CD4-positive, alpha-beta T cell (primary cell): ENCODE measurements at regions of chr6 and their contacts with region 1.

Region 1: DNA sequence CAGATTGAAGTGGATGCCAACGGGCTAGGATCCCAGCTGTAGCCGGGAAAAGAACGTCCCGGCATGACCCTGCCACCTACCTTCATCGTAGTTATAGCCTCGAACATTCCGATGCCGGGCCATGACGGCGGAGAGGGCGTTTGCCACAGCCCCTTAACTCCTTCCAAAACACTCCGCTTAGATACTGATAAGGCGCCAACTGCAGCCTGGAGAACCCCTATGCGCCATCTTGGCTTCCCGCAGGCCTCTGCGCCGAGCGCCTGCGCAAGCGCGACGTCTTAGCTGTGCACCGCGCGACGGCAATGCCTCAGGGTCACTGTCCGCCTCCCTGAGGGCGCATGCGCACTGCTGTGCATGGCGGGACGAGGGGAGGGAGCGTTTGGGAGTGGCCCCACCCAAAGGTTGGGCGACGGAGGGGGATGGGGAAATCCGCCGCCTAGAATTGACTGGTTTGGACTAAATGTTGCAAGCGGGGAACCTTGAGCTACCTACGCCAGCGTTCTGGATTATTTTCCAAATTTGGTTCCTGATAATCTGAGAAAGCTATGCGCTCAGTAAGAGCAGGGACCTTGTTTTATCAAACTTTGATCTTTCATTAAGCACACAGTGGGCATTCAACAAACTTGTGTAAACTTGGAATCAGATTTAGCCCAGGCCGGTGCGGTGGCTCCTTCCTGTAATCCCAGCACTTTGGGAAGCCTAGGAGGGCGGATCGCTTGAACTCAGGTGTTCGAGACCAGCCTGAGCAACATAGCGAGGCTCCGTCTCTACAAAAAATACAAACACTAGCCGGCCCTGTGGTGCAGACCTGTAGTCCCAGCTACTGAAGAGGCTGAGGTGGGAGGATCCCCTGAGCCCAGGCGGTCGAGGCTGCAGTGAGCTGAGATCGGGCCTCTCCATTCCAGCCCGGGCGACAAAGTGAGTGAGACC is at the start of gene HBS1L:
- DNase-seq: peak; percentile 92 to 100 (median 96)
- ATAC-seq: peak; percentile 96
- H3K4me3 ChIP-seq: peak within 1 kb of the TSS; percentile 86
- H3K4me3 Mint-ChIP-seq: peak within 1 kb of the TSS; percentile 96
- H3K27ac ChIP-seq: peak within 1 kb of the TSS; percentile 90 to 94
- H3K27ac Mint-ChIP-seq: peak within 1 kb of the TSS; percentile 99
- H3K4me1 ChIP-seq: peaks cover 16% of the 10 kb centered on the region
- H3K4me1 Mint-ChIP-seq: peaks cover 46% of the 10 kb centered on the region
- H3K27me3 ChIP-seq: no peaks in the 10 kb centered on the region
- H3K27me3 Mint-ChIP-seq: no peaks in the 10 kb centered on the region
- CTCF ChIP-seq: no peak
- total RNA-seq, gene HBS1L: 106 to 117 TPM

Region 2: DNA sequence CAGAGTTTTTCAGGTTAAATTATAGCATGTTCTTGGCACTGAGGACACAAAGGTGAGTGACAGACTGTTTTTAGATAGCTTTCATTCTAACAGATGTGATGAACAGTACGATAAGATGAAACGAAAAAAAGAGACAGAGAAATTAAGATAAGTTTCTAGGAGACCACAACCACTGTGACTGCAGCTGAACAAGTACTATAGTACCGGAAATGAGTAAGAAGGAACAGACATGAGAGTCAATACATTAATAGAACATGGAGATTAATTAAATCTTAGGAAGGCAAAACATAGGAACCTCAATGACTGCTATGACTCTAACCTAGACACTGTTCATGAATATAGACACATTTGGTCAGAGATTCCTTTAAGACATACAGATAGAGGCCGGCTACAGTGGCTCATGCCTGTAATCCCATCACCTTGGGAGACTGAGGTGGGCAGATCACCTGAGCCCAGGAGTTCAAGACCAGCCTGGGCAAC is 40.4 kb before region 1 on chr6:
- CTCF ChIA-PET with region 1: no interaction called
- POLR2A ChIA-PET with region 1: interaction called, 3 read pairs
- intact Hi-C with region 1: loop called in 1 of 2 experiments (anchors 5 kb)
- DNase-seq: peak in 4 of 14 experiments; percentile 24 to 67 (median 54)
- ATAC-seq: peak; percentile 87
- H3K4me3 ChIP-seq: peak overlapping the region; percentile 29
- H3K4me3 Mint-ChIP-seq: peak overlapping the region; percentile 66
- H3K27ac ChIP-seq: peak overlapping the region; percentile 56 to 69
- H3K27ac Mint-ChIP-seq: peak overlapping the region; percentile 78
- H3K4me1 ChIP-seq: peaks cover 20% of the 10 kb centered on the region
- H3K4me1 Mint-ChIP-seq: peaks cover 64% of the 10 kb centered on the region
- H3K27me3 ChIP-seq: no peaks in the 10 kb centered on the region
- H3K27me3 Mint-ChIP-seq: no peaks in the 10 kb centered on the region
- CTCF ChIP-seq: no peak

Region 3: DNA sequence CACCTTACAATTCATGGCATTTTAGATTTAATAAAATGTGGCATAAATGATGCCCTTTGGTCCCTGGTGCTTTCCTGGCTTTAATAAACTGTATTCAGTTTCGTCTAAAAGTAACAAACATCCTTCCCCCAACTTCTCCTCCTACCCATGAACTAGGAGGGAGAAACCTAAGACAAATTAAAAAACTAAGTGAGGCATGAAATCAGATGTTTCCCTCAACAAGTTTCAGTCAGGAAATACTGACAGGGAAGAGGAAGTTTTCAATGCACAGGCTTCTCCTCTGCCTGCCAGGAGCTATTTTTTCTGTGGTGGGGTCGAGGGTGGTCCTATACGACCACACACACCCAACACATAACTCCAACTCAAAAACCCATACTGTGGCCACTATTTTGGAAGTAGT is 10.2 kb before region 1 on chr6:
- CTCF ChIA-PET with region 1: interaction called, 3 read pairs
- POLR2A ChIA-PET with region 1: interaction called, 11 read pairs
- intact Hi-C with region 1: no loop called
- DNase-seq: no peak
- ATAC-seq: no peak
- H3K4me3 ChIP-seq: no peak overlapping the region
- H3K4me3 Mint-ChIP-seq: no peak overlapping the region
- H3K27ac ChIP-seq: no peak overlapping the region
- H3K27ac Mint-ChIP-seq: peak overlapping the region; percentile 66
- H3K4me1 ChIP-seq: peaks cover 26% of the 10 kb centered on the region
- H3K4me1 Mint-ChIP-seq: peaks cover 80% of the 10 kb centered on the region
- H3K27me3 ChIP-seq: no peaks in the 10 kb centered on the region
- H3K27me3 Mint-ChIP-seq: no peaks in the 10 kb centered on the region
- CTCF ChIP-seq: no peak

Region 4: DNA sequence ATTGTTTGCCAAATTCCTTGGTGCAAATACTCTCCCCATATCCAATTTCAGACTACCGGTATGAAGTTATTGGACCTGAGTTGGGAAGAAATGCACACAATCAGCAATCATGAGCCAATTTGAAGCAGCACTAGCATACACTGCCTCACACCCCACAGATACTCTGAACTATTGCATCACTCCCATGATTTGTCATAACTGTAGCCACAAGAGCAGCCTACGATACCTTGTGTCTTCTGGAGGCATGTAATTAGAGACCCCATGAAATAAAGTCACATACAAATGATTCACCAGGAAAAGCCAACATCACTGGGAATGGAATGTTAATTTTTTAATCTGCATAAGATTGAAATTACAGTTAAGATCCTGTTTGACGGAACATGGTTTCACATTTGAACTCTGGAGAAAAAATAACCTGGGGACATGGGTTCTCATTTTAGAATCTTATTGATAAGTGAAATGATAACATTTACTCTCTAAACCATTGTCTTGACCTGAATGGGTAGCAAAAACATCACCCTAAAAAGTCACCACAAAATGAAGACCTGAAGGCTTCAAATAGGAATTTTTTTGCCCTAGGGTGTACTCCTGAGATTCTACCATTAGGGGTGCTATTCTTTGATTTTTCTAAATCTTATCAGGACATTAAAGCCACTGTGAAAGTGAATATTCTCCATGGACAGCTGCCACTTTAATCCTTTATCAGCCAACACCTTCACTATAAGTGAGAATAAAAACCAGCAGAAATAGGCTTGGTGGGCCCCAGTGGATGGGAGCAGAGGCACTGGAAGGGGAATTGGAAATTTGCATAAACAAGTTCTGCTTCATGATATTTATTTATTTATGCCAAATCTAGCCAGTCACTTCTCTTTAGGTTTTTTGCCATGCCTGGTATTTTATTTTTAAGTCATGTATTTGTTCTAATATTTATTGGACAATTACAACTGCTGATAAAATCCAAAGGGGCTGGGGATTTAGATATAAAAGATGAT is 34.3 kb after region 1 on chr6:
- CTCF ChIA-PET with region 1: interaction called, 3 read pairs
- POLR2A ChIA-PET with region 1: interaction called, 57 read pairs
- intact Hi-C with region 1: loop called in 1 of 2 experiments (anchors 1 kb)
- DNase-seq: peak in 4 of 14 experiments; percentile 50 to 72 (median 64)
- ATAC-seq: peak; percentile 60
- H3K4me3 ChIP-seq: peak overlapping the region; percentile 38
- H3K4me3 Mint-ChIP-seq: peak overlapping the region; percentile 78
- H3K27ac ChIP-seq: peak overlapping the region in 1 of 2 donors; percentile 14
- H3K27ac Mint-ChIP-seq: peak overlapping the region; percentile 94
- H3K4me1 ChIP-seq: peaks cover 44% of the 10 kb centered on the region
- H3K4me1 Mint-ChIP-seq: peaks cover 86% of the 10 kb centered on the region
- H3K27me3 ChIP-seq: no peaks in the 10 kb centered on the region
- H3K27me3 Mint-ChIP-seq: no peaks in the 10 kb centered on the region
- CTCF ChIP-seq: peak; percentile 62

Region 5: DNA sequence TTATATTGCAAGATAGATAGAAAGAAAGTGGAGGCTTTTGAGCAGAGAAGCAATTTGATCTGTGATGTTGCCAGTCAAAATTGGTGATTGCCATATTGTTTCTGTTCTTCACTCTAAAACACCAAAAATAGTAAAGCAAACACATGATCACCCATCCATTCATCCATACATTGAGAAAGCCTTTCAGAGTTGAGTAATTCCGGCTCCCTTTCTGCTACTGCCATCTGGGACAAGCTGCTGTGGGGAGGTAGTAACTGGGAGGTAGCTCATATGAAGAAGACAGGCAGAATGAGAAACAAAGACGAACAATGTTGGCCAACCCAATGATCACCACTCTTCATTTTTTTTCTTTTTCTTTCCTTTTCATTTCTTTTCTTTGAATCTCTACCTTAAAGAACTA is 50.9 kb after region 1 on chr6:
- CTCF ChIA-PET with region 1: interaction called, 3 read pairs
- POLR2A ChIA-PET with region 1: interaction called, 43 read pairs
- intact Hi-C with region 1: loop called in 1 of 2 experiments (anchors 1 kb)
- DNase-seq: no peak
- ATAC-seq: no peak
- H3K4me3 ChIP-seq: no peak overlapping the region
- H3K4me3 Mint-ChIP-seq: no peak overlapping the region
- H3K27ac ChIP-seq: no peak overlapping the region
- H3K27ac Mint-ChIP-seq: peak overlapping the region; percentile 89
- H3K4me1 ChIP-seq: peaks cover 24% of the 10 kb centered on the region
- H3K4me1 Mint-ChIP-seq: peaks cover 66% of the 10 kb centered on the region
- H3K27me3 ChIP-seq: no peaks in the 10 kb centered on the region
- H3K27me3 Mint-ChIP-seq: no peaks in the 10 kb centered on the region
- CTCF ChIP-seq: no peak

Region 6: DNA sequence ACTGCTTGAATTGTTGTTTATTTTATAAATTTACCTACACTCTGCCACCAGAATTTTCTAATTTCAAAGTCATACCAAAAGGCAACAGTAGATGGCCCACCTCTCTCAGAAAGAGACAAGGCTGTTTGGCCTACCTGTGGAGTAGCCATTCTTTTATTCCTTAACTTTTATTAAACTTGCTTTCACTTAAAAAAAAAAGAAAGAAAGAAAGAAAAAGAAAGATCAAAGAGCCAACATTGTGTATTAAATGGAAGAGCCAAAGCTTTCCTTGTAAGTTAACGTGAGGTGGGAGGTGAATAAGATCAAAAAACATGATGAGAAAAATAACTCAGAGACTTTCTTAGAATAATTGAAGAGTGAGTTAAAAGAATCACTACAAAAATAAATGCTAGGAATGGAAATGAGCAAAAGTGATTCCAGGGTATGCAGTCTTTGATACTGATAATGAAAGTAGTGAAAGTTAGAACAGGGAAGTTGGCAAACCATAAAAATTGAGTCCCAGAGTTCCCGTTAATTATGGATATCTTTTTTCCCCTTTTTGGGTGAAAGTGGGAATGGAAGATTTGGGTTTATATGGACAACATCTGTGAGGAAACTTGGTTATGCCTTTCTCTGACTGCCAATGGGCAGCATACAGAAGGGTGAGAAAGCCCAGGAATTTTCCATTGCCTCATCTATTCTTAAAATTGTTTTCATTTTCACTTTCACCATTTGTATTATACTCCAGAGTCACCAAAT is 90.4 kb after region 1 on chr6:
- CTCF ChIA-PET with region 1: no interaction called
- POLR2A ChIA-PET with region 1: interaction called, 15 read pairs
- intact Hi-C with region 1: no loop called
- DNase-seq: peak in 4 of 14 experiments; percentile 39 to 65 (median 61)
- ATAC-seq: peak; percentile 74
- H3K4me3 ChIP-seq: peak overlapping the region; percentile 15
- H3K4me3 Mint-ChIP-seq: peak overlapping the region; percentile 3
- H3K27ac ChIP-seq: no peak overlapping the region
- H3K27ac Mint-ChIP-seq: peak overlapping the region; percentile 6
- H3K4me1 ChIP-seq: no peaks in the 10 kb centered on the region
- H3K4me1 Mint-ChIP-seq: peaks cover 51% of the 10 kb centered on the region
- H3K27me3 ChIP-seq: no peaks in the 10 kb centered on the region
- H3K27me3 Mint-ChIP-seq: no peaks in the 10 kb centered on the region
- CTCF ChIP-seq: peak; percentile 83

Region 7: DNA sequence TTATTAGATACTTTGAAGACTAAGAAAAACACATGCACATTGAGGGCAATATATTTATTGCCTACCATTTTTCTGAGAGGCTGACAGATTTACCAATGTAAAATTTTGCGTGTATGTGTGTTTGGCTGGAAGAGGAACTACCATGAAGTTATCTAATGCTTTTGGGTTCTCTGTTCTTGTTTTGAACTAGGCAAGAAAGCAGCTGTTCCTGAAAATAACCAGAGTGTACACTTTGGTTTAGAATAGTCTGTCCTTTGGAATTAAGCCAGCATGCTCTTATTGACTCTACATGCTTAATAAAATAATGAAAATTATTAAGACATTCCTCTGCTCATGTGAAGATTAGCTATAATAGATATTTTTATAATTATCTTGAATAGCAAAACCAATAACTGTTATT is 255.5 kb after region 1 on chr6:
- CTCF ChIA-PET with region 1: no interaction called
- POLR2A ChIA-PET with region 1: no interaction called
- intact Hi-C with region 1: no loop called
- DNase-seq: no peak
- ATAC-seq: no peak
- H3K4me3 ChIP-seq: no peak overlapping the region
- H3K4me3 Mint-ChIP-seq: no peak overlapping the region
- H3K27ac ChIP-seq: no peak overlapping the region
- H3K27ac Mint-ChIP-seq: no peak overlapping the region
- H3K4me1 ChIP-seq: no peaks in the 10 kb centered on the region
- H3K4me1 Mint-ChIP-seq: no peaks in the 10 kb centered on the region
- H3K27me3 ChIP-seq: no peaks in the 10 kb centered on the region
- H3K27me3 Mint-ChIP-seq: no peaks in the 10 kb centered on the region
- CTCF ChIP-seq: no peak

Region 8: GRCh38 chr6:136289579-136290409 is 1235.0 kb after region 1 on chr6 and contains the start of gene BCLAF1:
- CTCF ChIA-PET with region 1: no interaction called
- POLR2A ChIA-PET with region 1: interaction called, 24 read pairs
- intact Hi-C with region 1: no loop called
- DNase-seq: peak; percentile 99 to 100 (median 99)
- ATAC-seq: peak; percentile 70
- H3K4me3 ChIP-seq: peak within 1 kb of the TSS; percentile 88
- H3K4me3 Mint-ChIP-seq: peak within 1 kb of the TSS; percentile 97
- H3K27ac ChIP-seq: peak within 1 kb of the TSS; percentile 100
- H3K27ac Mint-ChIP-seq: peak within 1 kb of the TSS; percentile 99
- H3K4me1 ChIP-seq: peaks cover 52% of the 10 kb centered on the region
- H3K4me1 Mint-ChIP-seq: peaks cover 47% of the 10 kb centered on the region
- H3K27me3 ChIP-seq: no peaks in the 10 kb centered on the region
- H3K27me3 Mint-ChIP-seq: peaks cover 3% of the 10 kb centered on the region
- CTCF ChIP-seq: peak; percentile 7
- total RNA-seq, gene BCLAF1: 484 to 501 TPM